ENCODE measurements at regions of chr22 and their contacts with region 1.

Region 1: GRCh38 chr22:23219822-23220484 is 39.6 kb downstream of the BCR start:
- DNase-seq: peak; percentile 85
- H3K4me3 Mint-ChIP-seq: peak overlapping the region; percentile 78
- H3K27ac Mint-ChIP-seq: peak overlapping the region; percentile 91
- H3K4me1 Mint-ChIP-seq: peaks cover 90% of the 10 kb centered on the region
- H3K27me3 Mint-ChIP-seq: no peaks in the 10 kb centered on the region

Region 2: GRCh38 chr22:23240639-23241389 is 20.9 kb after region 1 on chr22:
- intact Hi-C with region 1: loop called (anchors 1 kb)
- DNase-seq: peak; percentile 73
- H3K4me3 Mint-ChIP-seq: peak overlapping the region; percentile 2
- H3K27ac Mint-ChIP-seq: peak overlapping the region; percentile 83
- H3K4me1 Mint-ChIP-seq: peaks cover 61% of the 10 kb centered on the region
- H3K27me3 Mint-ChIP-seq: no peaks in the 10 kb centered on the region

Region 3: DNA sequence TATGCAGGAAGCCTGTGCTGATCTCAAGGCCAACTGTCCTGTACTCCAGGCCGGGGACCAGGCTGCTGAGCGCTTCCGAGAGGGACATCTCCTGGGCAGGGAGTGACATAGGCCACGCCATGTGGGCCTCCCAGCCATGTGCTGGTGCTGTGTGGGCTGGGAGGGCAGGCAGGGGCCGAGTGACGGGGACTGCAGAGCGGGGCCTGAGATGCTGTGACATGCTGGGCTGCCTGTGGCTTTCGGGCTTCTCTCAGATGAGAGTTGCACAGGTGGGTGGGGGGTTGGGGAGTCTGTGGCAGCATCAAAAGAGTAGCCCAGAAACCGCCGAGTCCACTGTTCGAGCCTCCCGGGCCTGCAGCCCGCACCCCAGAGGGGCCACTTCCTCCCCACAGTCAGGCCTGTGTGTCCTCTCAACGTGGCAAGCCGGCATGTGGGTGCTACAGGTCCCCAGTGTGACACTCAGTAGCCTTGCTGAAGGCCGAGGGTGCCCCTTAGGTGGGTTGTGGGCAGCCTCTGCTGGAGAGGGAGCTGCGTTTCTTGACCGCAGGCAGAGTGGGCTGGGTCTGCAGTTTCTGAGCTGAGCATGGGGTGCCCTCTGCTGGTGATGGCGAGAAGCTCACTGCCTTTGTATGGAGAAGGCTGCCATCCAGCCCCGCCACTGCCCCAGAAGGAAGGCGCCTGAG is 61.6 kb after region 1 on chr22:
- intact Hi-C with region 1: loop called (anchors 5 kb)
- DNase-seq: peak; percentile 93
- H3K4me3 Mint-ChIP-seq: no peak overlapping the region
- H3K27ac Mint-ChIP-seq: no peak overlapping the region
- H3K4me1 Mint-ChIP-seq: peaks cover 12% of the 10 kb centered on the region
- H3K27me3 Mint-ChIP-seq: no peaks in the 10 kb centered on the region

Measured in activated CD4-positive, alpha-beta T cell treated with anti-CD3 and anti-CD28 coated beads, Interleukin-2, amount 10 ng/mL, durations not matched to agents 24 days and 14 days (primary cell).